Right lobe of liver (tissue), 6 donors: ENCODE measurements at regions of chr14 and their contacts with region 1.

Region 1: DNA sequence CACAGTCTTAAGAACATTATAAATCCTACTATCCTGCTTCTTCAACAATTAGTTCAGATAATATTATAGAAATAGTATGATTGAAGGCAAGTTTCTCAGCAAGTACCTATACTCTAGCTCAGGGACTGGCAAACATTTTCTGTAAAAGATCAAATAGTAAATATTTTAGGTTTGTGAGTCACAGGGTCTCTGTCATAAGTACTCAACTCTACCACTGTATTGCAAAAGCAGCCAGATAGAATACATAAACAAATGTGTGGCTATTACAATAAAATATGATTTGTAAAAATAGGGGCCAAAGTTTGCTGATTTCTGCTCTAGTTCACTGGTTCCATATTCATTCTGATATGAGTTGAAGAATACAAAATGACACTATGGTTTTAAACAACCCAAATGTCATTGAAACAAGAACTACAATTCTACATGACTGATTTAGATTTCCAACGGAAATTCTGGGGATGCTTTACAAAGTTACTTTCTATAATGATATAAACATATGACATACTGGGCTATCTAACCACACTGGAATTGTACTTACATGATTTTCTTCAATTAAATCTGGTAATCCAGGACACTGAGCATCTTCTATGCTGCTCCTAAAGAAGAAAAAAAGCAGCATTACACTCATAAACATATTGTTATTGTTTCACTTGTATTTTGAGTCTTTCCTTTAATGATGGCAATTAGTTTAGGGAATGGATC is 23.2 kb downstream of the LGALS3 start:
- DNase-seq: no peak
- ATAC-seq: no peak
- H3K4me3 ChIP-seq: no peak overlapping the region
- H3K27ac ChIP-seq: no peak overlapping the region
- H3K4me1 ChIP-seq: no peaks in the 10 kb centered on the region
- H3K27me3 ChIP-seq: no peaks in the 10 kb centered on the region
- CTCF ChIP-seq: no peak
- POLR2A ChIP-seq: no peak

Region 2: GRCh38 chr14:55097881-55098560 is 54.2 kb before region 1 on chr14:
- intact Hi-C with region 1: loop called (anchors 5 to 10 kb)
- DNase-seq: peak in 2 of 3 donors; percentile 32 to 49
- ATAC-seq: peak in 2 of 4 donors; percentile 10 to 35
- H3K4me3 ChIP-seq: no peak overlapping the region
- H3K27ac ChIP-seq: peak overlapping the region in 1 of 3 donors; percentile 31
- H3K4me1 ChIP-seq: peaks cover 0 to 11% (median 3%) of the 10 kb centered on the region in 4 donors
- H3K27me3 ChIP-seq: no peaks in the 10 kb centered on the region
- CTCF ChIP-seq: no peak
- POLR2A ChIP-seq: no peak